Activated T-helper 1 cell treated with anti-CD3 and anti-CD28 coated beads, Interleukin-12 subunit alpha, Interleukin-12 subunit beta, Interleukin-2, Interleukin-4 antibody, amounts not matched to agents 30 ng/mL and 10 ng/mL and 1 ng/mL, durations not matched to agents 14 hours and 24 hours and 36 hours (primary cell): ENCODE measurements at regions of chr2 and their contacts with region 1.

Region 1: GRCh38 chr2:222939208-222939856 is 78.5 kb downstream of the ACSL3 start:
- DNase-seq: peak; percentile 55
- H3K4me3 Mint-ChIP-seq: no peak overlapping the region
- H3K27ac Mint-ChIP-seq: no peak overlapping the region
- H3K4me1 Mint-ChIP-seq: peaks cover 13% of the 10 kb centered on the region
- H3K27me3 Mint-ChIP-seq: no peaks in the 10 kb centered on the region

Region 2: GRCh38 chr2:222743251-222743812 is 196.0 kb before region 1 on chr2:
- intact Hi-C with region 1: no loop called
- DNase-seq: no peak
- H3K4me3 Mint-ChIP-seq: no peak overlapping the region
- H3K27ac Mint-ChIP-seq: no peak overlapping the region
- H3K4me1 Mint-ChIP-seq: peaks cover 24% of the 10 kb centered on the region
- H3K27me3 Mint-ChIP-seq: peaks cover 2% of the 10 kb centered on the region

Region 3: DNA sequence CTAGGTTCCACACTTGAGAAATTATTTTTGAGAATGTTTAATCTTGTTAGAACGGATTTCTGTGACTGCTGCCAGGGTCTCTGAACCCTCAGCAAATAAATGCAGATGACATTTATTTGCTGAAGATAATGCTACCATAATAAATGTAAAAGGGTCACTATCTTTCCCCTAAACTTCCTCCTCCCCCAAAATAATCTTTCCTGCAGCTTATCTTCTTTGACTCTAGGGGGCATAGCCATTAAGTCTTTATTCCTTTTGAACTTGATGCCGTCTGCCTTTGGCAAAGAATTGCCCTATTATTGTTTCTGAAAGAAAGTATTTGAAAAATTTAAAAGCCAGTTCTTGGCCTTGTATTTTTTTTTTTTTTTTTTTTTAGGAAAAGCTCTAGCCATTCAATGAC is 142.1 kb before region 1 on chr2:
- intact Hi-C with region 1: loop called (anchors 1 kb)
- DNase-seq: no peak
- H3K4me3 Mint-ChIP-seq: no peak overlapping the region
- H3K27ac Mint-ChIP-seq: no peak overlapping the region
- H3K4me1 Mint-ChIP-seq: no peaks in the 10 kb centered on the region
- H3K27me3 Mint-ChIP-seq: peaks cover 10% of the 10 kb centered on the region

Region 4: DNA sequence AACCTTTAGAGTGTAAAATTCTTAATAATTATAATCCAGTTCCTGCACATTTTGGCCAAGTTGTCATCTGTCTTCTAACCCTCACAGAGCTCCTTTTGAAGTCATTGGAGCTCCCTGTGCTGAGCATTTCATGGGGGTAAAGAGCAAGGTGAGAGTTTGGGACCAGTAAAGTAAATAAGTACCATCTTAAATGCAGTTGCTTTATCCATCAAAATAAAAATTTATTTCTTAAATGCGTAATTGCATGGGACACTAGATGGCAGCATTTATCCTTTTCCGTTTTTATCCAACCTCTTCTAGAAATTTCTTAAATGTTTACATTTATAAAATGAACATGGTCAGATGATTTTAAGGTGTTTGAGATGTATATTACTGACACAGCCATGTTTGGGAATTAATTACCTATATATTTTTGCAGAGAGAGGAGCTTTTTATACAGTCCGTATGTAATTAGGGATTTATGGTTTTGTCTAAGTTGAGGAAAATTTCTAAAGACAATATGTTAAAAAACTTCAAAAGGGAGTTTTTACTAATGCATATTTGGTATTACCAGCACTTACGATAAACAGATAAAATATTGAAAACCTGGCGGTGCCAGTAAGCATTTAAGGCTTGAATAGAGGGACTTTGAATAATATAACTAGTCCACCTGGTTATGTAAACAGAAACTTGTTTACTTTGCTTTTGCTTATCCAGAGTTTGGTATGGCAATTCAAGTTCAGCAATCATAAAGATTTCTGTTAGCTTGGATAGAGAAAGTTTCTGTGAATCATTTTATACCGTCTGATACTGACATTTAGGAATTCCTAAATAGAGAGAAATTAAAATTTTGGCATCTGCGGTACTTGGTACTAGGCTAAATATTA is 24.0 kb before region 1 on chr2:
- intact Hi-C with region 1: loop called (anchors 2 kb)
- DNase-seq: no peak
- H3K4me3 Mint-ChIP-seq: no peak overlapping the region
- H3K27ac Mint-ChIP-seq: no peak overlapping the region
- H3K4me1 Mint-ChIP-seq: peaks cover 22% of the 10 kb centered on the region
- H3K27me3 Mint-ChIP-seq: no peaks in the 10 kb centered on the region

Region 5: GRCh38 chr2:223008162-223008561 is 68.8 kb after region 1 on chr2:
- intact Hi-C with region 1: no loop called
- DNase-seq: no peak
- H3K4me3 Mint-ChIP-seq: no peak overlapping the region
- H3K27ac Mint-ChIP-seq: no peak overlapping the region
- H3K4me1 Mint-ChIP-seq: no peaks in the 10 kb centered on the region
- H3K27me3 Mint-ChIP-seq: peaks cover 2% of the 10 kb centered on the region

Region 6: GRCh38 chr2:223051693-223052289 is 112.5 kb after region 1 on chr2 and contains the start of gene KCNE4:
- intact Hi-C with region 1: no loop called
- DNase-seq: no peak
- H3K4me3 Mint-ChIP-seq: no peak within 1 kb of the TSS
- H3K27ac Mint-ChIP-seq: no peak within 1 kb of the TSS
- H3K4me1 Mint-ChIP-seq: no peaks in the 10 kb centered on the region
- H3K27me3 Mint-ChIP-seq: no peaks in the 10 kb centered on the region
- total RNA-seq, gene KCNE4: not detected in 2 replicates

Region 7: GRCh38 chr2:223075301-223076270 is 136.3 kb after region 1 on chr2:
- intact Hi-C with region 1: no loop called
- DNase-seq: no peak
- H3K4me3 Mint-ChIP-seq: no peak overlapping the region
- H3K27ac Mint-ChIP-seq: no peak overlapping the region
- H3K4me1 Mint-ChIP-seq: no peaks in the 10 kb centered on the region
- H3K27me3 Mint-ChIP-seq: peaks cover 4% of the 10 kb centered on the region